Ascending aorta (tissue), 2 donors: ENCODE measurements at regions of chr1 and their contacts with region 1.

Region 1: DNA sequence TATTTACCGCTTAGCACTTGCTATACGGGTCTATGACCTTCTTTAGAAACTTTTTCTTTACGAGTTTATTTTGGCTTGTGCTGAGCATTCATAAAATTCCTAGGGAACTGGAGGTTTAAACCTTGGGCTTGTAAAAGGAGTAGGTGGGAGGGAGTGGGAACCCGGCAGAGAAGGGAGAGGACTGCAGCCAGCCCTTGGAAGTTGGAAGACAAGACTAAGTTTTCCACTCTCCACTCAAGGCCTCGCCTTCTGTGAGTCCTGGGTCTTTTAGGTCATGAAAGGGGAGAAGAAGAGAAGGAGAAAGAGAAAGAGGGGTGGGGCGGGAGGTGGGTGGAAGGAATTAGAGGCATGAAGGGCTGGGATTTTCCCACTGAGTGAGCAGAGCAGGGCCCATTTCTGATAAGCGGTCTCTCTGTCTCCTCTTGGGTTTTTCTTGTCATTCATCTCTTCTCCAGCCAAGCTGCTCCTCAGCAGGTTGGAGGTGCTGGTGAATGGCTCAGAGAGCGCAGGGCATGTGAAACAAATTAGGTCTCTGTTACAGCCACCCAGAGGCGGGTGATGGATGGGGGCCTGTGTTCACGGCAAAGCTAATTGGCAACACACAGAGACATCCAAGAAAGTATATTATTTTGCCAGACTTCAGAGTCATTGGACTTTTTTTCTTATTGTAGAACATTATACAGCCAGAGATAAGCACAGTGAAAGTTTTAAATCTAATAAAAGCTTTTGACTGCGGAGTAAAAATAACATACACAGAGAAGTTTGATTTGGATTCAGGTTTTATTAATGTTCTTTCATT is 247.3 kb downstream of the FOXD2 start:
- DNase-seq: peak in 1 of 2 donors; percentile 83
- H3K4me3 ChIP-seq: peak overlapping the region in 1 of 2 donors; percentile 9
- H3K27ac ChIP-seq: peak overlapping the region; percentile 85 to 89
- H3K4me1 ChIP-seq: peaks cover 0 to 31% of the 10 kb centered on the region in 2 donors
- H3K27me3 ChIP-seq: no peaks in the 10 kb centered on the region
- CTCF ChIP-seq: peak in 1 of 3 experiments; percentile 2

Region 2: GRCh38 chr1:47587891-47588582 is 97.1 kb before region 1 on chr1:
- intact Hi-C with region 1: no loop called
- DNase-seq: peak in 1 of 2 donors; percentile 72
- H3K4me3 ChIP-seq: no peak overlapping the region
- H3K27ac ChIP-seq: no peak overlapping the region
- H3K4me1 ChIP-seq: peaks cover 14 to 40% of the 10 kb centered on the region in 2 donors
- H3K27me3 ChIP-seq: no peaks in the 10 kb centered on the region
- CTCF ChIP-seq: no peak

Region 3: GRCh38 chr1:47644212-47644573 is 41.0 kb before region 1 on chr1:
- intact Hi-C with region 1: loop called (anchors 2 kb)
- DNase-seq: no peak
- H3K4me3 ChIP-seq: no peak overlapping the region
- H3K27ac ChIP-seq: peak overlapping the region; percentile 66 to 82
- H3K4me1 ChIP-seq: peaks cover 4 to 24% of the 10 kb centered on the region in 2 donors
- H3K27me3 ChIP-seq: no peaks in the 10 kb centered on the region
- CTCF ChIP-seq: no peak

Region 4: DNA sequence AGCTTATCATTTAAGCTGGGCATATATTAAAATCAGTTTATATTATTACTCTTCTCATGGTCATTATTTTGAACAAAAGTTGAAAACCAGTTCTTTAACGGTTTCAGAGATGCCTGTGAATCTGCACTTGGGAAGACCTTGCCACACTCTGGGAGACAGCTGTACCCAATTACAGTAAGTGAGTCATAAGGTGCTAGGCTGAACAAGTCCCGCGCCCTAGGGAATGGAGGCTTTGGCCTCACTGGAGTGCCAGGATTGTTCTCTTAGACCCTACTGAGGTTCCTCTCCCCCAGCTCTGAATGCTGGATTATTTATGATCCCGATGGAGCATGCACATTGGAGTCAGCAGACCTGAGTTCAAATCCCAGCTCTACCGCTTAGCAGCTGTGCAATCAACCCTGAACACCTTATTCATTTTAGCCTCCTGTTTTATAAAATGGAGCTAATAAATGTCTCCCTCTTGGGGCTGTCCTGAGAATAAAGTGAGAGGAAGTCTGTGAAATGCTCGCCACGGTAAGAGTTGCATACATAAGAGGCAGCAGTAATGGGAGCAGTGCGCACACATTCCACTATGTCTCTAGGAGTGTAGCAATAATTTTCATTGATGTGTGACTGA is 18.9 kb after region 1 on chr1:
- intact Hi-C with region 1: loop called (anchors 2 kb)
- DNase-seq: no peak
- H3K4me3 ChIP-seq: no peak overlapping the region
- H3K27ac ChIP-seq: peak overlapping the region; percentile 39 to 61
- H3K4me1 ChIP-seq: peaks cover 0 to 19% of the 10 kb centered on the region in 2 donors
- H3K27me3 ChIP-seq: no peaks in the 10 kb centered on the region
- CTCF ChIP-seq: peak; percentile 30 to 58 (median 48)

Region 5: DNA sequence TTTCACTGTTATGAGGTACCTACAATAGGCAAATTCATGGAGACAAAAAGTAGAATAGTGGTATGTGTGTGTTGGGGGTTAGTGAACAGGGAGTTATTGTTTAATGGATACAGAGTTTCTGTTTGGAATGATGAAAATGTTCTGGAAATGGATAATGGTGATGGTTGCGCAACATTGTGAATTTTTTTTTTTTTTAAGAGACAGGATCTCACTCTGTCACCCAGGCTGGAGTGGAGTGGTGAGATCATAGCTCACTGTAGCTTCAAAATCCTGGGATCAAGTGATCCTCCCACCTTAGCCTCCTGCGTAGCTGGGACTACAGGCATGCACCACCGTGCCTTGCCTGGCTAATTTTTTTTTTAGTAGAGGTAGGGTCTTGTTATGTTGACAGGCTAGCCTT is 346.5 kb after region 1 on chr1:
- intact Hi-C with region 1: no loop called
- DNase-seq: peak in 1 of 2 donors; percentile 18
- H3K4me3 ChIP-seq: no peak overlapping the region
- H3K27ac ChIP-seq: no peak overlapping the region
- H3K4me1 ChIP-seq: peaks cover 0 to 5% of the 10 kb centered on the region in 2 donors
- H3K27me3 ChIP-seq: no peaks in the 10 kb centered on the region
- CTCF ChIP-seq: no peak